Activated CD4-positive, alpha-beta T cell treated with anti-CD3 and anti-CD28 coated beads for 36 hours (primary cell): ENCODE measurements at regions of chr19 and their contacts with region 1.

Region 1: DNA sequence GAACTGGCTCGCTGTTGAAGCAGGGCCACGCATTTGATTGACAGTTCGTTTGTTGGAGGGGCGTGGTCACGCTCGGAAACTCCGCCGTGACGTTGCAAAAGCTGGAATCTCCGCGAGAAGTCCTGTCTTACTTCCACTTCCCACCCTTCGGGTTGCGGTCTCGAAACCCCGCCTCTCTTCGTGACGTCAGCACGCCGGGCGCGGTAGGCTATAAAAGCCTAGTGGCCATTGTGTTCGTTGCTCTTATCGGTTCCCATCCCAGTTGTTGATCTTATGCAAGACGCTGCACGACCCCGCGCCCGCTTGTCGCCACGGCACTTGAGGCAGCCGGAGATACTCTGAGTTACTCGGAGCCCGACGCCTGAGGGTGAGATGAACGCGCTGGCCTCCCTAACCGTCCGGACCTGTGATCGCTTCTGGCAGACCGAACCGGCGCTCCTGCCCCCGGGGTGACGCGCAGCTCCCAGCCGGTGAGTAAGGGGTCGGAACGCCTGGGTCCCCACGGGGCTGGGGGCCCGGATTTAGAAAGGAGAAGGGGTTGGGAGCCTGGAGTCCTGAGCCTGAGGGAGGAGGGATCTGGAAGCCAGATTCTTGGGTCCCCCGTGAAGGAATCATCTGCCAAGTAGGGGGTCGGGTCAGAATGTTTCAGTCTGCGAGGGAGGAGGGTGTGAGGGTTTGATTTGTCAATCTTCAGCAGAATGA is at the start of gene PPP1R15A:
- DNase-seq: peak; percentile 99
- ATAC-seq: peak; percentile 50
- H3K4me3 Mint-ChIP-seq: peak within 1 kb of the TSS; percentile 98
- H3K27ac Mint-ChIP-seq: peak within 1 kb of the TSS; percentile 99
- H3K4me1 Mint-ChIP-seq: peaks cover 41% of the 10 kb centered on the region
- H3K27me3 Mint-ChIP-seq: no peaks in the 10 kb centered on the region
- total RNA-seq, gene PPP1R15A: 51.6 to 62.4 TPM

Region 2: DNA sequence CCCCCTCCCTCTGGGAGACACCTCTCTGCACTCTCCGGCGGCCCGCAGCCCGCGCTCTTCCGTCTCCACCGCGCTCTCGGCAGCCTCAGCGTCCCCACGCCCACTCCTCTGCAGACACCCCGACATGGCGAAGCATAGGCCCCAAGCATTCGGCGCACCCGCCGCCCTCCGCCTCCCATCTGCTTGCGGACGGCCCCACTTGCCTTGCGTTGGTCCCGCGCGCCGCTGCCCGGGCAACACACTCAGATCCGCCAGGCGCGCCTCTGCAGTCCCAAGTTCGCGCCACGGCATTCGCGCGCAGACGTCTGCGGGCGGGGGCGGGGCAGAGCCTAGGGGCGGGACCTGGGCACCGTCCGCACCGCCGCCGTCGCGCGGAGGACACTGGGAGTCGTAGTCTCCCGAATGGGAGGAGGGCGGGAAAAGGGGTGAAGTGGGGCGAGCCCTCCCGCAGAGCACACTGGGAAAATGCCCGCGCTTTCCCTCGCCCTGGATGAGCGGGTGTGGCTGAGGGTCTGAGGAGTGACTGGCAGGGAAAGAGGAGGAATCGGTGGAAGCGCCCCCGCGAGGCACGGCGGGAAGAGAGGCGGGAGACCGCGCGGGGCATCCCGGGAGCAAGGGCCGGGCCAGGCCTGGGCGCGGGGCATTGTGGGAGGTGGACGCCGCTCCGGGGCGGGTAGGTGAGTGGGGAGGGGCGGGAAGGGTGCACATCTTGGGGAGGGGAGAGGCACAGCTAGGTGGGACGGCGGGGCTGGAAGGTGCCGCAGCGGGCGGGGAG is 702.1 kb before region 1 on chr19 and contains the starts of genes LIG1 and ZSWIM9:
- CTCF ChIA-PET with region 1: no interaction called
- POLR2A ChIA-PET with region 1: no interaction called
- intact Hi-C with region 1: loop called in 1 of 2 experiments (anchors 10 kb)
- DNase-seq: peak; percentile 96
- ATAC-seq: peak; percentile 90
- H3K4me3 Mint-ChIP-seq: peak within 1 kb of the TSS; percentile 79
- H3K27ac Mint-ChIP-seq: peak within 1 kb of the TSS; percentile 95
- H3K4me1 Mint-ChIP-seq: peaks cover 30% of the 10 kb centered on the region
- H3K27me3 Mint-ChIP-seq: no peaks in the 10 kb centered on the region
- total RNA-seq, gene LIG1: 193 to 194 TPM
- total RNA-seq, gene ZSWIM9: 7.4 to 10.9 TPM

Region 3: DNA sequence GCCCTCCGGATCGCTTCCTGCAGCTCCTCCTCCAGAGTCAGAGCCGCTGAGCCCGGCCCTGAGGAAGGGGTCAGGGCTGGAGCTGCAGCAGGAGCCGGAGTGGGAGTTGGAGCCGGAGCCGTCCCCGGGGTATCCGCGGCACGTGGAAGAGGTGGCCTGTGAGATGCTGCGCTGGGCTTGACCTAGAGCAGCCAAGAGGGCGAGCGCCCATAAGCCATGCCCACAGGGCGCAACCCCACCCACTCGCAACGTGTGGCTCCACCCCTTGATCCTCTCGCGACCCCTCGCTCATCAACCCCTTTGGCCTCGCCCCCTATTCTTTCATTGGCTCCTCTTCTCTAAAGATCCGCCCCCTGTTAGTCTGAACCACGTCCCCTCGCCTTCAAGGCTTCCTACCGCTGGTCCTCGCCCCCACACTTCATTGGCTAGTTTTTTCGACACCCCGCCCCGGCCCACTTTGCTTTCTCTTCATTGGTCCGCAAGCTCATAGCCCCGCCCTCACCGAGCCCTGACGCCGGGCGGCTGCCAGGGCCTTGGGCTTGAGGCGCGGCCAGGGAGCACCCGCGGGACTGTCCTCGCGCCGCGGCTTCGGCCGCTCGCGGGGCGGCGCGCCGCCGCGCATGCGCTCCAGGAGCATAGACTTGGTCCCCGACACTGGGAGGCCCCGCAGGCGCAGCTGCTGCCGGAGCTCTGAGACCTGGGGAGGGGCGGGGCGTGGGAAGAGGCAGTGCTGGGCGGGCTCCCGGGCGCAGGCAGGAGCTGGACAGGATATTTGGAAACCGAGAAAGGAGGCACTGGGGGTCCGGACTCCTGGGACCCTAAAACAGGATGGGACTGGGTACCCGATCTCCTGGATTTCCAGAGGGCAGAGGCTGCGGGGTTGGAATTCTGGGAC is 158.2 kb before region 1 on chr19:
- CTCF ChIA-PET with region 1: no interaction called
- POLR2A ChIA-PET with region 1: no interaction called
- intact Hi-C with region 1: loop called in 1 of 2 experiments (anchors 1 kb)
- DNase-seq: peak; percentile 99
- ATAC-seq: peak; percentile 93
- H3K4me3 Mint-ChIP-seq: peak overlapping the region; percentile 83
- H3K27ac Mint-ChIP-seq: peak overlapping the region; percentile 84
- H3K4me1 Mint-ChIP-seq: peaks cover 14% of the 10 kb centered on the region
- H3K27me3 Mint-ChIP-seq: no peaks in the 10 kb centered on the region

Region 4: GRCh38 chr19:48746738-48747575 is 125.4 kb before region 1 on chr19 and contains the start of gene IZUMO1:
- CTCF ChIA-PET with region 1: no interaction called
- POLR2A ChIA-PET with region 1: no interaction called
- intact Hi-C with region 1: no loop called
- DNase-seq: peak; percentile 77
- ATAC-seq: peak; percentile 86
- H3K4me3 Mint-ChIP-seq: peak within 1 kb of the TSS; percentile 10
- H3K27ac Mint-ChIP-seq: no peak within 1 kb of the TSS
- H3K4me1 Mint-ChIP-seq: peaks cover 16% of the 10 kb centered on the region
- H3K27me3 Mint-ChIP-seq: peaks cover 14% of the 10 kb centered on the region
- total RNA-seq, gene IZUMO1: not detected

Region 5: DNA sequence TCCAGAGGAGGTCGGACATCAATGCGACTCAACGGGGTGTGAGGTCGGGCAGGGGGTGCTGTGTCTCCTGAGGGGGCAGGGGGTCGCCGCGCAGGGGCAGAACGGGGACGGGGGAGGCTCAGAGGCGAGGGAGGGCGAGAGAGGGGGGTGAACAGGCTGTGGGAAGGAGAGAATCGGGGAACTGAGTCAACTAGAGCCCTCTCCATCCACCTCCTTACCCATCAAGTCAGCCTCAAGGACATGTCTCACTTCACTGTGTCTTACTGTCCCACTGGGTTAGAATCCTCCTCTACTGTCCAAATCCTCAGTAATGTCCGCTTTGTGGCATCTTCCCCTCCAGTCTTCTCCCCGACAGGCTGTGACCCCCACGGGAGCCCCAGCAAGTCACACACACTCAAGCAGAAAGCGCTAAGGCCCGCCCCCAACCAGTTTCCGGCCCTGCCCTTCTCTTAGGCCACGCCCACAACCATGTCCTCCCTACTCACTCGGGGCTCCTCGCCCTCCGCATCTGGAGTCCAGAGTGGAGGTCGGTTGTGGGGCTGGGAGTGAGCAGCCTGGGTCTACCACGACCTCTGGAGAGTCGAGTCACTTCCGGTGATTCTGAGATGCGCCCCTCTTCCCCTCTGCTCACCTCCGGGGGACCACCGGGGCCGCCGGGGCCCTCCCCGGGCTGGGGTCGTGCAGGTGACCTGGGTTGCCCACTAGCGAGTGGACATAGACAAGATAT is 13.2 kb before region 1 on chr19:
- CTCF ChIA-PET with region 1: interaction called, 3 read pairs
- POLR2A ChIA-PET with region 1: interaction called, 4 read pairs
- intact Hi-C with region 1: loop called (anchors 1 to 2 kb)
- DNase-seq: peak; percentile 92
- ATAC-seq: peak; percentile 92
- H3K4me3 Mint-ChIP-seq: peak overlapping the region; percentile 94
- H3K27ac Mint-ChIP-seq: peak overlapping the region; percentile 93
- H3K4me1 Mint-ChIP-seq: peaks cover 7% of the 10 kb centered on the region
- H3K27me3 Mint-ChIP-seq: no peaks in the 10 kb centered on the region

Region 6: GRCh38 chr19:48965040-48965805 is 92.9 kb after region 1 on chr19 and contains the start of gene FTL:
- CTCF ChIA-PET with region 1: interaction called, 4 read pairs
- POLR2A ChIA-PET with region 1: interaction called, 4 read pairs
- intact Hi-C with region 1: loop called (anchors 1 kb)
- DNase-seq: peak; percentile 95
- ATAC-seq: peak; percentile 79
- H3K4me3 Mint-ChIP-seq: peak within 1 kb of the TSS; percentile 86
- H3K27ac Mint-ChIP-seq: peak within 1 kb of the TSS; percentile 90
- H3K4me1 Mint-ChIP-seq: peaks cover 53% of the 10 kb centered on the region
- H3K27me3 Mint-ChIP-seq: no peaks in the 10 kb centered on the region
- total RNA-seq, gene FTL: 809 to 1,111 TPM

Region 7: DNA sequence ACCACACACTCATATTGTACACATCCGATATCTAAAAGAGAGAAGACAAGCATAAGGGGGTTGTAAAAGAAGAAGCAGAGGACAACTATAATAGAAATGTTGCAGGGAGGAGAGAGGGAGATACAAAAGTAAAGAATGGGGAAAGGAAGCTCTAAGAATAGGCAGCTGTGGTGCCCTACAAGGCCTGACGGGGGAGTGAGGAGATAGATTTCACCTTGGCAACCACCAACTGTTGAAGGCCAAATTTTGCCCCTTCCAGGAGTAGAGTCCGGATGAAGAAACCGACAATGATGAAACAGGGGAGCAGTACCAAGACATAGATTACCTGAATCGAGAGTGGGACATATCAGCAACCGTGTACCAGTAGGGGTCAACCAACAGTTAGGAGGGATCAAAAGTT is 436.8 kb after region 1 on chr19:
- CTCF ChIA-PET with region 1: no interaction called
- POLR2A ChIA-PET with region 1: no interaction called
- intact Hi-C with region 1: no loop called
- DNase-seq: no peak
- ATAC-seq: no peak
- H3K4me3 Mint-ChIP-seq: no peak overlapping the region
- H3K27ac Mint-ChIP-seq: no peak overlapping the region
- H3K4me1 Mint-ChIP-seq: no peaks in the 10 kb centered on the region
- H3K27me3 Mint-ChIP-seq: no peaks in the 10 kb centered on the region

Region 8: DNA sequence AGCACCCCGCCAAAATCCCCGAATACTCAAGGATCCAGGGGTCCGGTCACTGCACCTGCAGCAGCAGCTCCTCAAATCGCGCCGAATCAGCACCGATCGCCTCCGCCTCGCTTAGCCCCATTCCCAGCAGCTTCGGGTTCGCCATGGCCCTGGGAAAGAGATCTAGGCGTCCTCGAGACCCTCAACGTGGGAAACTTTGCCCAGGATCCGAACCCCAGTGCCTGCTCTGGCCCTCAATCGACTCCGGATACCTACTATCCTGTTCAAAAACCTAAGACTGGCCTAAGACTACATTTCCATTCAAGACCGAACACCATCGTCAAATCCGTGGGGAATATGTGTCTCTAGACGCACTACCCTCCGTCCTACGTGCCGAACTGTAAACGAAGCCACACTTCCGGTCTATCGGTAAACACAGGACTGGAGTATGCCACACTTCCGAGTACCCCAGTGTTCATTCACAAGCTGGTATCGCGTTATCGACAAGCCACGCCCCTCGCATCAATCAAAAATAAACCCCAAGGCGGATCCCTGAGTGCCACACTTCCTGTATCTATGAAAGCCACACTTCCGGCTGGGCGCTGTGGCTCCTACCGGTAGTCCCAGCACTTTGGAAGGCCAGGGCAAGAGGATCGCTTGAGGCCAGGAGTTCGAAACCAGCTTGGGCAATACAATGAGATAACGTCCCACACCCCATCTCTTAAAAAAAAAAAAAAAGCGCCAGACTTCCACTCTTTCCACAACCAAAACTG is 579.3 kb after region 1 on chr19 and contains the start of gene PIH1D1:
- CTCF ChIA-PET with region 1: no interaction called
- POLR2A ChIA-PET with region 1: no interaction called
- intact Hi-C with region 1: loop called in 1 of 2 experiments (anchors 1 kb)
- DNase-seq: peak; percentile 98
- ATAC-seq: peak; percentile 71
- H3K4me3 Mint-ChIP-seq: peak within 1 kb of the TSS; percentile 100
- H3K27ac Mint-ChIP-seq: peak within 1 kb of the TSS; percentile 100
- H3K4me1 Mint-ChIP-seq: peaks cover 50% of the 10 kb centered on the region
- H3K27me3 Mint-ChIP-seq: no peaks in the 10 kb centered on the region
- total RNA-seq, gene PIH1D1: 117 to 138 TPM